ENCODE measurements at regions of chr11 and their contacts with region 1.

Region 1: GRCh38 chr11:101860696-101861427 is 53.9 kb upstream of the CEP126 start:
- DNase-seq: no peak
- H3K4me3 ChIP-seq: no peak overlapping the region
- H3K27ac ChIP-seq: no peak overlapping the region
- H3K4me1 ChIP-seq: peaks cover 16% of the 10 kb centered on the region
- H3K27me3 ChIP-seq: no peaks in the 10 kb centered on the region
- CTCF ChIP-seq: peak; percentile 46 to 65 (median 52)
- POLR2A ChIP-seq: no peak

Region 2: GRCh38 chr11:102007567-102008437 is 146.9 kb after region 1 on chr11:
- intact Hi-C with region 1: loop called (anchors 5 kb)
- DNase-seq: no peak
- H3K4me3 ChIP-seq: no peak overlapping the region
- H3K27ac ChIP-seq: no peak overlapping the region
- H3K4me1 ChIP-seq: peaks cover 26% of the 10 kb centered on the region
- H3K27me3 ChIP-seq: no peaks in the 10 kb centered on the region
- CTCF ChIP-seq: peak in 2 of 3 experiments; percentile 43 to 54
- POLR2A ChIP-seq: no peak